A673 (cell line): ENCODE measurements at regions of chr14 and their contacts with region 1.

Region 1: DNA sequence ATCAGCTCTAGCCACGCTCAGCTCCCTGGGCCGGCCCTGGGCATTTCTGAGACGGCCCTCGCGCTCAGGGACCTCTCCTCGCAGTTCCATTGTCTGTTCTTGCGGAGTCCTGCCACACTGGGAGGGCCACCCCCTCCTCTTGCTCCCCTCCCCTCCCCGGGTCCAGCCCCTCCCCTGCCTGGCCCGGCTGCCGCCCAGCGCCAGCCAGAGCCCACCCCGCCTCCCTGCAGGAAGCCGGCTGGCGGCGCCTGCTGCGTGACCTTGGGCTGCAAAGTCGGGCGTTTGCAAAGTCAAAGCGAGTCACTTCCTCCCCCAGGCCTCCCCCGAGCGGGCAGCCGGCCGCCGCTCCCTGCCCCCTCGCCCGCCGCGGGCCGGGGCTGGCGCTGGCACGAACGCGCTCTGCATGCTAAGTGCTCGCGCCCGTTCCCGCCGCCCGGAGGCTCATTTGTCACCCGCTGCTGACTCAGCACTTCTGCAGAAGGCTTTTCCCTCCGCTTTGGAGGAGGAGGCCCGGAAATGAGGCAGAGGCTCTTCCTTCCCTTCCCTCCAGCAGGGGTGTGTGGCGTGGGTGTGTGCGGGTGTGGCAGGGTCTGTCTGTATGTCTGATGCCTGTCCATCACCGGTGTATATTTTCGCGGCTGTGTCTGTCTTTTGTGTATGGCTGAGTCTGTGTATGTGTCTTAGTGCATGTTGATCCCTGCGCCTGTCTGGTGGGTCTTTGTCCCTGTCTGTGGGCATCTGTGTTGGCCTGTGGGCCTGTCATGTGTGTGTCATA is 72.0 kb downstream of the IRF2BPL start:
- DNase-seq: peak; percentile 99
- H3K4me3 ChIP-seq: peak overlapping the region; percentile 35
- H3K27ac ChIP-seq: peak overlapping the region; percentile 99
- H3K4me1 ChIP-seq: peaks cover 70% of the 10 kb centered on the region
- H3K27me3 ChIP-seq: no peaks in the 10 kb centered on the region
- CTCF ChIP-seq: no peak

Region 2: DNA sequence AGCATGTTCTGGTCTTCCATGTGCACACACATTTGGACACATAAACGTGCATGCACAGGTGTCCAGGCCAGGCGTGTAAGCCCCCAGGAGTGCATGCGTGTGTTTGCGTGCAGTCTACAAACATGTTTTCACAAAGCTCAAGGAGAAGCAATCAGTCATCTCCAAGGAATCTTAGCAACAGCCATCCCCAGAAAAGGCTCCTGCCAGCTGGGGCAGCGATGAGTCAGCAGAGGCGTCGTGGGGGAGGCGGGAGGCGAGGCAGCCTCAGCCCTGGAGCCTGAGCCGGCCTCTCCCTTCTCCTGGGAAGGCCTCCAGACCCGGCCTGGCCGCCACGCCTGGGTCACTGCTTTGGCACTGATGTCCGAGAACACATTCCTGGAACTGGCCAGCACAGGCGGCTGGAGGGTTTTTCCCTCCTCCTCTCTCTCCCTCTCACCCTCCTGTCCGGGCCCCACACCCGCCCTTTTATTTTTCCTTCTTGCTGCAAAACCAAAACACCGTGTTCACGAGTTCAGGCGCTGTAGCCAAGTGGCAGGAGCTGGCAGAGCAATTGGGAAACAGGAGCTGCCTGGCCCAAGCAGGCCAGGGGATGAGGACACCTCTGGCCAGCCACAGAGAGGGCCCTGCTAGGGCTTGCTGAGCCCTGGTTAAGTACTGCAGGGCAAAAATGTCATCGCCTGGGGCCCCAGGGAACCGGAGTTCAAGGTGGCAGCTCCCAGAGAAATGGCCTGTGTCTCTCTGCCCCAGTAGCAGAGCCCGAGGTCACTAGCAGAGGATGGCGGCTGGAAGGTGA is 37.6 kb before region 1 on chr14:
- CTCF ChIA-PET with region 1: interaction called, 3 read pairs
- POLR2A ChIA-PET with region 1: interaction called, 4 read pairs
- intact Hi-C with region 1: loop called (anchors 1 kb)
- DNase-seq: peak; percentile 92
- H3K4me3 ChIP-seq: no peak overlapping the region
- H3K27ac ChIP-seq: peak overlapping the region; percentile 99
- H3K4me1 ChIP-seq: peaks cover 83% of the 10 kb centered on the region
- H3K27me3 ChIP-seq: no peaks in the 10 kb centered on the region
- CTCF ChIP-seq: no peak

Region 3: GRCh38 chr14:77023001-77023996 is 66.8 kb after region 1 on chr14:
- CTCF ChIA-PET with region 1: interaction called, 10 read pairs
- POLR2A ChIA-PET with region 1: no interaction called
- intact Hi-C with region 1: loop called (anchors 2 kb)
- DNase-seq: peak; percentile 74
- H3K4me3 ChIP-seq: peak overlapping the region; percentile 87
- H3K27ac ChIP-seq: peak overlapping the region; percentile 97
- H3K4me1 ChIP-seq: peaks cover 25% of the 10 kb centered on the region
- H3K27me3 ChIP-seq: no peaks in the 10 kb centered on the region
- CTCF ChIP-seq: peak; percentile 39

Region 4: GRCh38 chr14:77033622-77034521 is 77.4 kb after region 1 on chr14:
- CTCF ChIA-PET with region 1: interaction called, 5 read pairs
- POLR2A ChIA-PET with region 1: no interaction called
- intact Hi-C with region 1: loop called (anchors 2 kb)
- DNase-seq: peak; percentile 80
- H3K4me3 ChIP-seq: peak overlapping the region; percentile 58
- H3K27ac ChIP-seq: peak overlapping the region; percentile 92
- H3K4me1 ChIP-seq: peaks cover 74% of the 10 kb centered on the region
- H3K27me3 ChIP-seq: no peaks in the 10 kb centered on the region
- CTCF ChIP-seq: no peak

Region 5: DNA sequence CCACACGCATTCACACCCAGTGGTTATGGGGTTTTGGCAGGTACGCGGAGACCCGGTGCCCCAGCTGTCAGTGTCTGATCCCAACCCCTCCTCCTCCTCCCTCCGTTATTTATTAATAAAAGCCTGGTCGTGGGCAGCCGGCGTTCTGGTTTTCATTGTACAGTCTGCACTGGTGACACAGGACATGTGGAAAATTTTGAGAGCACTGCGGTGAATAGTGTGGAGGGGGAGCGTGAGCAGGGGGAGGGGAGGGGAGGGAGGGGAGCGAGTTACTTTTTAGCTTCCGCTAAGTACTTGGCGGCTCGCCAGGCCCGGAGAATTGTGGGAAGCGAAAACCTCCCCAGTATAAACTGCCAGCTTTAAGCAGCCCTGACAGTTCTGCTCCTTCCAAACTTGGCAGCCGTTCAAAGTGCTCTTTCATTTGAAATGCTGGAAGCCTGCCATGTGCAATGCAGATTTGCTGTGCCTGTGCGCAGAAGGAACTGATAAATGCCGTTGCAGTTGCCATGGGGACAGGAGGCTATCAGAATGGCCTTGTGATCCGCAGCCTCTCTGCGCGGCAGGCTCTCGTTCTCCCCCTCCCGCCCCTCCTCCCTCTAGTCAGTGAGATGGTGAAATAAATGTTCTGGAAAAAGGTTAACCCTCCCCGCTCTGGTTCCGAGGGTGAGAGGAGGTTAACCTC is 83.7 kb after region 1 on chr14:
- CTCF ChIA-PET with region 1: interaction called, 7 read pairs
- POLR2A ChIA-PET with region 1: no interaction called
- intact Hi-C with region 1: loop called (anchors 1 kb)
- DNase-seq: peak; percentile 100
- H3K4me3 ChIP-seq: peak overlapping the region; percentile 25
- H3K27ac ChIP-seq: peak overlapping the region; percentile 92
- H3K4me1 ChIP-seq: peaks cover 85% of the 10 kb centered on the region
- H3K27me3 ChIP-seq: no peaks in the 10 kb centered on the region
- CTCF ChIP-seq: no peak